ENCODE measurements at regions of chr13 and their contacts with region 1.

Region 1: GRCh38 chr13:23254506-23254905 is 73.7 kb downstream of the SGCG start:
- DNase-seq: no peak
- ATAC-seq: no peak
- H3K4me3 ChIP-seq: no peak overlapping the region
- H3K27ac ChIP-seq: no peak overlapping the region
- H3K4me1 ChIP-seq: no peaks in the 10 kb centered on the region
- H3K27me3 ChIP-seq: no peaks in the 10 kb centered on the region
- CTCF ChIP-seq: no peak
- POLR2A ChIP-seq: no peak

Region 2: DNA sequence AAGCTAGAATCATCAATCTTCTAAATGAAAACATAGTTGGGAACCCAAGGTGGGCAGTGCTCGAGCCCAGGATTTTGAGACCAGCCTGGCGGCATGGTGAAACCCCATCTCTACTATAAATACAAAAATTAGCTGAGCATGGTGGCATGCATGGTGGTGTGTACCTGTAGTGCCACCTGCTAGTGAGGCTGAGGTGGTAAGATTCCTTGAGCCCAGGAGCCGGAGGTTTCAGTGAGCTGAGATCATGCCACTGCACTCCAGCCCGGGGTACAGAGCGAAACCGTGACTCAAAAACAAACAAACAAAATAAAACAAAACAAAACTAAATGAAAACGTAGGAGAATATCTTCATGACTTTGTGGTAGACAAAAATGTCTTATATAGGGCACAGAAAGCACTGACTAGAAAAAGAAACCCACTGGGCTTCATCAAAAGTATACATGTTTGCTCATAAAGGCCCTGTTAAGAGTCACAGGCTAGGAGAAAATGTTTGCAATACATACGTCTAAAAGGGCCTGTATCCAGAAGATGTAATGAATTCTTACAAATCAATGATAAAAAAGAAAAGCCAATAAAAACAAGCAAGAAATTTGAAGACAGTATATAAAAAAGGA is 1230.0 kb before region 1 on chr13:
- intact Hi-C with region 1: loop called in 1 of 10 experiments (anchors 10 kb)
- DNase-seq: no peak
- ATAC-seq: no peak
- H3K4me3 ChIP-seq: no peak overlapping the region
- H3K27ac ChIP-seq: no peak overlapping the region
- H3K4me1 ChIP-seq: no peaks in the 10 kb centered on the region
- H3K27me3 ChIP-seq: no peaks in the 10 kb centered on the region
- CTCF ChIP-seq: no peak
- POLR2A ChIP-seq: no peak

Region 3: DNA sequence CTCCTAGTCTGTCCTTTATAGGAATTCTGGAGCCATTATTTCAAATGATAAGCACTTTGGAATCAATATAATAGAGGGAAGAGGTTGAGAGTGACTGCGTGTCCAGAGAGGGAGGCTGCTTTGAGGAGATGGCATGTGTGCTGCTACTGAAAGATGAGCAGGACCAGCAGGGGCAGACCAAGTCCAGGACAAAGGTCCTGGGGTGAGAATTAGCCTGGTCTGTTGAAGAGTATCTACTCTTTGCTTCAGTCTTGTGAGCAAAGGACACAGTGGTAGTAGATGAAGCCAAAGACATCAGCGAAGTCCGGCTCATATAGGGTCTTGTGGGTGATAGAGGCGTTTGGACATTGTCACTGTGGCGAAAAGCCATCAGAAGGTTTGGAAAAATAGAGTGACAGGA is 52.6 kb before region 1 on chr13:
- intact Hi-C with region 1: no loop called
- DNase-seq: no peak
- ATAC-seq: peak in 1 of 4 donors; percentile 21
- H3K4me3 ChIP-seq: no peak overlapping the region
- H3K27ac ChIP-seq: no peak overlapping the region
- H3K4me1 ChIP-seq: peaks cover 0 to 11% (median 0%) of the 10 kb centered on the region in 12 donors
- H3K27me3 ChIP-seq: no peaks in the 10 kb centered on the region
- CTCF ChIP-seq: no peak
- POLR2A ChIP-seq: no peak

Region 4: GRCh38 chr13:23231241-23231640 is 23.3 kb before region 1 on chr13:
- intact Hi-C with region 1: no loop called
- DNase-seq: no peak
- ATAC-seq: no peak
- H3K4me3 ChIP-seq: no peak overlapping the region
- H3K27ac ChIP-seq: no peak overlapping the region
- H3K4me1 ChIP-seq: peaks cover 0 to 6% (median 0%) of the 10 kb centered on the region in 12 donors
- H3K27me3 ChIP-seq: no peaks in the 10 kb centered on the region
- CTCF ChIP-seq: no peak
- POLR2A ChIP-seq: no peak

Measured in heart left ventricle (tissue), 16 donors.